ENCODE measurements at regions of chr7 and their contacts with region 1.

Region 1: GRCh38 chr7:73329861-73330581 is 2.1 kb downstream of the FKBP6 start:
- DNase-seq: no peak
- ATAC-seq: 0 out of 2 replicates have a peak, but pooled peaks have one; percentile 22
- H3K4me3 ChIP-seq: no peak overlapping the region
- H3K27ac ChIP-seq: no peak overlapping the region
- H3K4me1 ChIP-seq: no peaks in the 10 kb centered on the region
- H3K27me3 ChIP-seq: no peaks in the 10 kb centered on the region
- CTCF ChIP-seq: no peak

Region 2: DNA sequence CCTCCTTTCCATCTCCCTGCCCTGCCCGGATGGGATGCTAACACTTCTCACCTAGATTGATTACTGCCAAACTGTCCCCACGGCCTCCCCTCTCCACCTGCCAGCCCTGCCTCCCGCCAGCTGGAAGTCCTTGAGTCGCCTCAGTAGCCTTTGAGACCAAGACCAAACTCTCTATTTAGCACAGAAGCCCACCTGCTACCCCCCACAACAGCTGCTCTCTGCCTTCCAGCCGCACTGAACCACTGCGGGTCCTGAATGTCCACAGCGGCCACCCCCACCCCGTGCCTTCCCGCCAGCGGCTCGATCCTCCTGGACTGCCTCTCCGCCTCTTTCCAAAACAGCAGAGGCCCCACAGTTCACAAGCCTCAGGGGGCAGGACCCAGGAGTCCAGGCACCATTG is 37.0 kb after region 1 on chr7:
- CTCF ChIA-PET with region 1: interaction called, 12 read pairs
- POLR2A ChIA-PET with region 1: no interaction called
- in situ Hi-C with region 1: no loop called
- intact Hi-C with region 1: no loop called
- DNase-seq: no peak
- ATAC-seq: no peak
- H3K4me3 ChIP-seq: no peak overlapping the region
- H3K27ac ChIP-seq: no peak overlapping the region
- H3K4me1 ChIP-seq: peaks cover 3% of the 10 kb centered on the region; the same call in 1 of the 2 replicates
- H3K27me3 ChIP-seq: no peaks in the 10 kb centered on the region
- CTCF ChIP-seq: no peak

Measured in Panc1 (cell line).